ENCODE measurements at regions of chr3 and their contacts with region 1.

Region 1: DNA sequence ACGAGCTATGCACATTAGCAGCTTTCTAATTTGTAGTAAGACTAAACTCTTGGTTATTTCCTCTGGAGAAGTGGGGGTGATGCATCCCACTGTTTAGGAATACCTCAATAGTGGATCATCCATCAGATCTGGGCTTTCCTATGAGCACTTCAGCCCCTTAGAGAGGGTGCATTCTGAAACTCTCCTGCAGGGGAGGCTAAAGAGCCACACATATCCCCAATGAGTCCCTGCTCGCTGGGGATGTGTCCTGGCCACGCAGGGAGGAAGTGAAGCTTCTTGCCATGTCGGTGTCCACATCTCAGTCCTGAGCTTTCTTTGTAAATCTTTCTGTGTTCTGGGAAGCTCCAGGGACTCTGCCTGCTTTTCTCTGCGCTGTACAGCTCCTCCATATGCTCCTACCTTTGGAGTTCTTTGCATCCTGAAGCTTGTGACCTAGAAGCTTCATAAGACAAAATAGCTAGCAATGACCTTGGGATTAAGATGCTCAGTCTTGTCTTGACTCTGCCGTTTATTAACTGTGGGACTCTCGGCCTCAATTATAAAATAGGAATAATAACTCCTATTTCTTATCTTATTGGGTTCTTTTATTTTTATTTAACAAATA is 28.3 kb upstream of the MASP1 start:
- DNase-seq: peak; percentile 92
- H3K4me3 ChIP-seq: no peak overlapping the region
- H3K27ac ChIP-seq: no peak overlapping the region
- H3K4me1 ChIP-seq: peaks cover 12% of the 10 kb centered on the region
- H3K27me3 ChIP-seq: no peaks in the 10 kb centered on the region
- CTCF ChIP-seq: peak; percentile 97 to 98 (median 97)
- POLR2A ChIP-seq: no peak

Region 2: DNA sequence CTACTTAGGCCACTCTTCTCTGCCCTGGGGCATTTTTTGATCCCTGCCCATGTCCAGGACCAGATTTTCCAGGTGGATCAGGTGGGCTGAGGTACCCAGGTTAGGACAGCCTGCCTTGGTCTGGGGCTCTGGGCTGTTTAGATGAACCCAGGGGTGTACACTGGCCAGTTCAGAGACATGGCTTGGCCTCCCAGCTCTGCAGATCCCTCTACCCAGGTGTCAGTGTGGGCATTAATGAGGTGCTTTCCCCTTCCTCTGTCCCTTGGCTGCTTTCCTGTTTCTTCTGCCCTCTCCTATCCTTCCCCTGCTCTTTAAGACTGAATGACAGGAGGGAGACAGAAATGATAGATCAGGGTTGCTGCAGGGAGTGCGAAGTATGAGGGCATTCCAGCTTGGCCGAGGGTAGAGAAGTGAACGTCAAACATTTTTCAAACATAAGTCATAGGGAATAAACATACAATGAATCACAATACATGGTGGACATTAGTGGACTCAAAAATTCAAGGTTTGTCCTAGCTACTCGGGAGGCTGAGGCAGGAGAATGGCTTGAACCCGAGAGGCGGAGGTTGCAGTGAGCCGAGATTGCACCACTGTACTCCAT is 92.0 kb before region 1 on chr3:
- intact Hi-C with region 1: loop called (anchors 10 kb)
- DNase-seq: no peak
- H3K4me3 ChIP-seq: no peak overlapping the region
- H3K27ac ChIP-seq: no peak overlapping the region
- H3K4me1 ChIP-seq: no peaks in the 10 kb centered on the region
- H3K27me3 ChIP-seq: no peaks in the 10 kb centered on the region
- CTCF ChIP-seq: no peak
- POLR2A ChIP-seq: no peak

Region 3: DNA sequence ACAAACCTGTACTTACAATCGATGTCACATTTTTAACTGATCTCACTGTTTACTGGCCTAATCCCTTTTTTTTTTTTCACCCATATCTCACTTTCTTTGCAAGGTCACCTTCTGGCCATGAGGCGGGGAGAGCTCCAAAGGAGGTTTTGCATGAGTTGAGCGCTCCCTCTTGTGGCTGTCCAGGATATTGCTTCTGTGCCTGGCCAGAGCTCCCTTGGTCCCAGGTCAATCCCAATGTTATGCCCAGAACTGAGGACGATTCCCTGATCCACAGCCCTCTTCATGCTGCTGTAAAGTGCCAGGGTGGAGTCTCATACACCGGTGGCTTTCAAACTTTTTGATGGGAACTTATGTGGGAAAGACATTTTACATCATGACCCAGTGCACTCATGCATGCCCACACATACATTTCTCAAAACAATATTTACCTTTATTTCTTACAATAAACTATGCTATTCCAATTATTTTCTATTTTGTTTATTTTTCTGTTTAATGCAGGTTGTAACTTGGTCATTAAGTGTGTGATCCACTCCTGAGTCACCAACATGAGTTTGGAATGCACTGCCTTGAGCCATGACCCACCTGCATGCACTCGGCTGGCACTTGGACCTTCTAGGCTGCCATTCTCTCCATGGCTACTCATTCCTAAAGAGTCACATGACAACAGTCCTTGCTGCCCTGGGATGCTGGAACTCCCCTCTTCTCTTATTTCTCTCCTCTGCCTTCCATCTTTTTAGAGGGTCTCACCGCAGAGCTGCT is 360.0 kb after region 1 on chr3:
- intact Hi-C with region 1: loop called (anchors 10 kb)
- DNase-seq: peak; percentile 92
- H3K4me3 ChIP-seq: no peak overlapping the region
- H3K27ac ChIP-seq: no peak overlapping the region
- H3K4me1 ChIP-seq: no peaks in the 10 kb centered on the region
- H3K27me3 ChIP-seq: no peaks in the 10 kb centered on the region
- CTCF ChIP-seq: peak; percentile 89 to 94 (median 94)
- POLR2A ChIP-seq: no peak

Measured in testis (tissue), 5 donors.